ENCODE measurements at regions of chr16 and their contacts with region 1.

Region 1: DNA sequence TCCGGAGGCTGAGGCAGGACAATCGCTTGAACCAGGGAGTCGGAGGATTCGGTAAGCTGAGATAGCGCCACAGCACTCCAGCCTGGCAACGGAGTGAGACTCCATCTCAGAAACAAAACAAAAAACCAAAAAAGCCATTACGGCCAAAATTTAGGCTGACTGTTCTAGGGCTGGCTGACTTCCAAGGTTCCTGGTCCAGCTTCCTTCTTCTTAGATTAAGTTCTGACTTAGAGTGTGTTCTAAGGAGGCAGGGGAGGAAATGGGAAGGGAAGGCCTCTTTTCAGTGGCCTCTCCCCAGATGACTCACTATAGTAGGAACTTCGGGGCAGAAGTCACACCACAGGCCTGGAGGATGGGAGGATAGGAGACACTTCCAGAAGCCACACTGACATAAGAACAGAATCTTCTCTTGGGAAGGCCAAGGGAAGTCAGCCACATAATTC is 27.7 kb upstream of the CLEC18B start:
- DNase-seq: peak; percentile 87
- ATAC-seq: peak; percentile 94
- H3K4me3 ChIP-seq: no peak overlapping the region
- H3K27ac ChIP-seq: peak overlapping the region; percentile 86
- H3K4me1 ChIP-seq: peaks cover 25% of the 10 kb centered on the region
- H3K27me3 ChIP-seq: no peaks in the 10 kb centered on the region
- CTCF ChIP-seq: no peak

Region 2: DNA sequence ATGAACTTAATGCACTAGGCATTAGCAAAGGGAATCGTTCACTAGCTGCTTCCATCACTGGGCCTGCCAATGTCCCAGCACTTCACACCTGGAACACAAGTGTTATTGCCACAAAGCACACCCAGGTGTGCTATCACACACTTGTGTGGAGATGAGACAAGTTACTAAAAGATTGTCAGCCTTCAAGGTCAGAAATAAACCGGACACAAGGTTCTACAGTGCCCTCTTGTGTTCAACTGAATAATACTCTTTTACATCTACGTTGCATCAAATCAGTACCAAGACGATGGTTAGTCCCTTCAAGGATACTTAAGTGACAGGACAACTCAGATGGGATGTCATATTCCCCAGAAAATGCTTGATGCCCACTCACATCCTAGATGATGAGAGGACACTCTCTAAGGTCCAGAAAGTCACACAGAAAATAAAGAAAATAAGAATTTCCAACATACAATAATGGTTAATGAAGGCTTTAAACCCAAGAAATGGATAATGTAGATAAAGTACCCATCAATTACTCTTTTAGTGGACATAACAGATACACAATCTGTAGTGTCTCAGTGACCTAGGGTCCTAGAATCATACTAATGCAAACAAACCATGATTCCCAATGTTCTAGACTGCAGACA is 174.3 kb after region 1 on chr16:
- CTCF ChIA-PET with region 1: no interaction called
- POLR2A ChIA-PET with region 1: no interaction called
- intact Hi-C with region 1: loop called (anchors 10 kb)
- DNase-seq: peak; percentile 59
- ATAC-seq: peak; percentile 56
- H3K4me3 ChIP-seq: no peak overlapping the region
- H3K27ac ChIP-seq: no peak overlapping the region
- H3K4me1 ChIP-seq: no peaks in the 10 kb centered on the region
- H3K27me3 ChIP-seq: no peaks in the 10 kb centered on the region
- CTCF ChIP-seq: peak; percentile 71